PC-3 (cell line): ENCODE measurements at regions of chr2 and their contacts with region 1.

Region 1: DNA sequence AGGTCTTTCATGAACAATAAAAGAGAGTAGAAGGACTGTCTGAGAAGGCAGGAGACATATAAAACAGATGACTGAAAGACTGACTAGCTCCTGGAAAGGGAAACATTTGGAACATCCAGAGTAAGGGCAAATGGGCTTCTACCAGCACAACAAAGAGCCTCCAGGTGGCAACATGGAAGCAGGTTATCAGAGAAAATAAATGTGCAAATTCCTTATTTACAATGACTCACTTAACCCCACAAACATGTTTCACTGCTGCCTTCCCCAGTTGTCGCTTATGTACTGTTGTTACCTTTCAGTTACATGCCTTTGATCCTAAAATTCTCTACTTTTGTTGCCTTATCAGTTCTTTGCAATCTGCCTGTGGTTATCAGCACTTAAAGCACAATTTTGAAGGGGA is 117.0 kb downstream of the HIBCH start:
- DNase-seq: peak; percentile 53
- ATAC-seq: peak; percentile 81
- H3K4me3 ChIP-seq: no peak overlapping the region
- H3K27ac ChIP-seq: no peak overlapping the region
- H3K4me1 ChIP-seq: peaks cover 6% of the 10 kb centered on the region; the same call in 1 of the 2 replicates
- H3K27me3 ChIP-seq: no peaks in the 10 kb centered on the region
- CTCF ChIP-seq: peak; percentile 52; the same call in 1 of the 2 replicates

Region 2: DNA sequence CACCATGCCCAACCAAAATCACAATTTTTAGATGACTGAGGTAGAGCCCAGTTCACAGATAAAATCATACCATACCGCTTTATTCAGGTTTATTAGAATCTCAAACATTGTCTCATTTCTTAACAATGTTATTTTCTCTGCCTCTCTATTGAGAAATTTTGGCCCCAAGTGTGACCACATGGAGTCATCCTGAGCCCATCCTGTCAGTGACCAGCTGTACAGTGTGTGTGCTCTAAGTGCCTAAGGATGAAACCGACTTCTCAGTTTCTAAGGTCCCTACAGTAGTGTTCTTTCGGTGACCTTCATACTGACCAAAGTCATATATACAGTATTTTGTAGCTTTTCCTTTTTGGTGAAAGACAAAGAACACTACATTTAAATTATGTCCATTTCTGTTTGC is 16.4 kb before region 1 on chr2:
- CTCF ChIA-PET with region 1: interaction called, 12 read pairs
- POLR2A ChIA-PET with region 1: no interaction called
- intact Hi-C with region 1: no loop called
- DNase-seq: no peak
- ATAC-seq: no peak
- H3K4me3 ChIP-seq: no peak overlapping the region
- H3K27ac ChIP-seq: no peak overlapping the region
- H3K4me1 ChIP-seq: no peaks in the 10 kb centered on the region
- H3K27me3 ChIP-seq: no peaks in the 10 kb centered on the region
- CTCF ChIP-seq: no peak

Region 3: GRCh38 chr2:190277234-190278112 is 74.9 kb after region 1 on chr2:
- CTCF ChIA-PET with region 1: no interaction called
- POLR2A ChIA-PET with region 1: no interaction called
- intact Hi-C with region 1: loop called (anchors 1 kb)
- DNase-seq: peak; percentile 58
- ATAC-seq: peak; percentile 60
- H3K4me3 ChIP-seq: no peak overlapping the region; the same call in 1 of the 2 replicates
- H3K27ac ChIP-seq: no peak overlapping the region
- H3K4me1 ChIP-seq: no peaks in the 10 kb centered on the region
- H3K27me3 ChIP-seq: no peaks in the 10 kb centered on the region
- CTCF ChIP-seq: peak; percentile 73

Region 4: GRCh38 chr2:190382851-190383250 is 180.2 kb after region 1 on chr2:
- CTCF ChIA-PET with region 1: no interaction called
- POLR2A ChIA-PET with region 1: no interaction called
- intact Hi-C with region 1: loop called (anchors 2 kb)
- DNase-seq: peak; percentile 72
- ATAC-seq: peak; percentile 42
- H3K4me3 ChIP-seq: no peak overlapping the region
- H3K27ac ChIP-seq: no peak overlapping the region
- H3K4me1 ChIP-seq: peaks cover 11% of the 10 kb centered on the region
- H3K27me3 ChIP-seq: no peaks in the 10 kb centered on the region
- CTCF ChIP-seq: peak; percentile 80